Right lobe of liver (tissue), 6 donors: ENCODE measurements at regions of chr4 and their contacts with region 1.

Region 1: GRCh38 chr4:72701987-72702819 is 133.2 kb upstream of the ADAMTS3 start:
- DNase-seq: no peak
- ATAC-seq: peak; percentile 82 to 90 (median 88)
- H3K4me3 ChIP-seq: peak overlapping the region; percentile 30 to 52 (median 40)
- H3K27ac ChIP-seq: no peak overlapping the region
- H3K4me1 ChIP-seq: no peaks in the 10 kb centered on the region
- H3K27me3 ChIP-seq: no peaks in the 10 kb centered on the region
- CTCF ChIP-seq: peak; percentile 62 to 71 (median 67)
- POLR2A ChIP-seq: no peak

Region 2: GRCh38 chr4:72919937-72920336 is 217.7 kb after region 1 on chr4:
- intact Hi-C with region 1: loop called in 1 of 2 experiments (anchors 10 kb)
- DNase-seq: no peak
- ATAC-seq: peak; percentile 70 to 83 (median 79)
- H3K4me3 ChIP-seq: peak overlapping the region in 1 of 3 donors; percentile 17
- H3K27ac ChIP-seq: peak overlapping the region in 2 of 3 donors; percentile 1 to 62
- H3K4me1 ChIP-seq: peaks cover 0 to 23% (median under 1%) of the 10 kb centered on the region in 4 donors
- H3K27me3 ChIP-seq: no peaks in the 10 kb centered on the region
- CTCF ChIP-seq: no peak
- POLR2A ChIP-seq: no peak

Region 3: DNA sequence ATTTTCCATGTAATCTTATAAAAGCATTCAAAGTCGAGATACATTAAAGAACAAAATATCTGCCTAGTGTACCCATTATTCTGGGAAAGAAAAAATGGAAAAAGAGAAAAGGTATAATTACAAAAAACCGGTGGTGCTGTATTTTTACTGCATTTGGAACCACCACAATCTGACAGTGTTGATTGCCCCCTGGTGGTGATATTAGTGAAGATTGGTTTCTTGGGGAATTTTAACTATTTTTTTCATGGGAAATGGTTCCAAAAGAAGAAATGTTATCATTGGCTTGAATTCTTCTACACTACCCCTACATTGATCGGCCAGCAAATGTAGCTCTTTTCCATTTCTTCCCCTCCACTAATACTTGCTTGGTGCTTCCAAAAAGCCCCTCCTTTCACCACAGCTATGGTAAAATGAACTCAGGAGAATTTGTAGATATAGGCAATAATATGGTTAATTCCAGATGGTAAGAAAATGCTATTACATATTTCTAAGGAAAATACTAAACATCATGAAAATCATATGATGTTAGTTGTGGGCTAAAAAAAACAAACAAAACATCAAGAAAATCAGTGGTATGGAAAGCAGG is 317.4 kb after region 1 on chr4:
- intact Hi-C with region 1: loop called in 1 of 2 experiments (anchors 10 kb)
- DNase-seq: no peak
- ATAC-seq: peak; percentile 38 to 68 (median 66)
- H3K4me3 ChIP-seq: no peak overlapping the region
- H3K27ac ChIP-seq: no peak overlapping the region
- H3K4me1 ChIP-seq: no peaks in the 10 kb centered on the region
- H3K27me3 ChIP-seq: no peaks in the 10 kb centered on the region
- CTCF ChIP-seq: peak; percentile 68 to 75 (median 72)
- POLR2A ChIP-seq: no peak

Region 4: GRCh38 chr4:73069338-73070073 is 367.3 kb after region 1 on chr4 and contains the start of gene COX18:
- intact Hi-C with region 1: no loop called
- DNase-seq: peak; percentile 98 to 99 (median 99)
- ATAC-seq: peak; percentile 88 to 96 (median 90)
- H3K4me3 ChIP-seq: peak within 1 kb of the TSS; percentile 66 to 80 (median 69)
- H3K27ac ChIP-seq: peak within 1 kb of the TSS; percentile 87 to 98 (median 96)
- H3K4me1 ChIP-seq: peaks cover 0 to 15% (median 1%) of the 10 kb centered on the region in 4 donors
- H3K27me3 ChIP-seq: no peaks in the 10 kb centered on the region
- CTCF ChIP-seq: no peak
- POLR2A ChIP-seq: peak; percentile 97
- total RNA-seq, gene COX18: 12.4 to 28.9 (median 17.0) TPM